ENCODE measurements at regions of chr9 and their contacts with region 1.

Region 1: DNA sequence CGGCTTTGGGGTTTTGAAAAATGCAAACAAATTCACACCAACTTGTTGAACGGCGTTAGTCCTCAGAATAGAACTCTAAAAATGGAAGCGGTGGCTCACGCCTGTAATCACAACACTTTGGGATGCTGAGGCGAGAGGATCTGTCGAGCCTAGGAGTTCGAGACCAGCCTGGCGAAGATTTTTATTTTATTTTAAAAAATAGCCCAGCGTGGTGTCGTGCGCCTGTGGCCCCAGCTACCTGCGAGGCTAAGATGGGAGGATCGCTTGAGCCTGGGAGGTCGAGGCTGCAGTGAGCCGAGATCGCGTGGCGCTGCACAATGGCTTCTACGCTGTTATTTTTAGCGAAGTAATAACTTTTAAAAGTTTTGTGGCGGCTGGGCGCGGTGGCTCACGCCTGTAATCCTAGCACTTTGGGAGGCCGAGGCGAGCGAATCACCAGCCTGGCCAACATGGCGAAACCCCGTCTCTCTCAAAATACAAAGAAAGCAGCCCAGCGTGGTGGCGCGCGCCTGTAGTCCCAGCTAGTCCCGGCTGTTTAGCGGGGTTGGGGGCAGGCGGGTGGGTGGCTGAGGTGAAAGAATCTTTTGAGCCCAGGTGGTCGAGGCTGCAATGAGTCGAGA is 699 bp upstream of the PLIN2 start:
- DNase-seq: no peak
- ATAC-seq: peak; percentile 35
- H3K4me3 ChIP-seq: peak overlapping the region; percentile 77
- H3K27ac ChIP-seq: peak overlapping the region; percentile 85
- H3K4me1 ChIP-seq: peaks cover 23% of the 10 kb centered on the region
- H3K27me3 ChIP-seq: no peaks in the 10 kb centered on the region
- CTCF ChIP-seq: no peak
- EP300 ChIP-seq: no peak
- POLR2A ChIP-seq: no peak; the same call in 1 of the 2 replicates
- RAD21 ChIP-seq: no peak

Region 2: GRCh38 chr9:19085295-19085694 is 42.7 kb before region 1 on chr9:
- CTCF ChIA-PET with region 1: interaction called, 11 read pairs
- POLR2A ChIA-PET with region 1: interaction called, 5 read pairs
- RAD21 ChIA-PET with region 1: interaction called, 4 read pairs
- SMC1A ChIA-PET with region 1: interaction called, 5 read pairs
- in situ Hi-C with region 1: no loop called
- intact Hi-C with region 1: no loop called
- DNase-seq: no peak
- ATAC-seq: peak; percentile 88
- H3K4me3 ChIP-seq: no peak overlapping the region
- H3K27ac ChIP-seq: no peak overlapping the region
- H3K4me1 ChIP-seq: no peaks in the 10 kb centered on the region
- H3K27me3 ChIP-seq: no peaks in the 10 kb centered on the region
- CTCF ChIP-seq: peak; percentile 33 to 47 (median 35); a peak in 3 of 6 replicates
- EP300 ChIP-seq: no peak
- POLR2A ChIP-seq: no peak
- RAD21 ChIP-seq: peak; percentile 47

Region 3: GRCh38 chr9:19102631-19103345 is 25.2 kb before region 1 on chr9 and contains the start of gene HAUS6:
- CTCF ChIA-PET with region 1: interaction called, 3 read pairs
- POLR2A ChIA-PET with region 1: interaction called, 9 read pairs
- RAD21 ChIA-PET with region 1: interaction called, 5 read pairs
- SMC1A ChIA-PET with region 1: interaction called, 3 read pairs
- in situ Hi-C with region 1: no loop called
- intact Hi-C with region 1: loop called (anchors 1 kb)
- DNase-seq: peak; percentile 89
- ATAC-seq: peak; percentile 98
- H3K4me3 ChIP-seq: peak within 1 kb of the TSS; percentile 80
- H3K27ac ChIP-seq: peak within 1 kb of the TSS; percentile 72
- H3K4me1 ChIP-seq: peaks cover 9% of the 10 kb centered on the region; the same call in 1 of the 2 replicates
- H3K27me3 ChIP-seq: no peaks in the 10 kb centered on the region
- CTCF ChIP-seq: peak in 2 of 3 experiments; percentile 10 to 44; a peak in 1 of 6 replicates
- EP300 ChIP-seq: no peak
- POLR2A ChIP-seq: peak; percentile 80
- RAD21 ChIP-seq: no peak
- polyA plus RNA-seq, gene HAUS6: 7.1 to 8.4 TPM

Region 4: DNA sequence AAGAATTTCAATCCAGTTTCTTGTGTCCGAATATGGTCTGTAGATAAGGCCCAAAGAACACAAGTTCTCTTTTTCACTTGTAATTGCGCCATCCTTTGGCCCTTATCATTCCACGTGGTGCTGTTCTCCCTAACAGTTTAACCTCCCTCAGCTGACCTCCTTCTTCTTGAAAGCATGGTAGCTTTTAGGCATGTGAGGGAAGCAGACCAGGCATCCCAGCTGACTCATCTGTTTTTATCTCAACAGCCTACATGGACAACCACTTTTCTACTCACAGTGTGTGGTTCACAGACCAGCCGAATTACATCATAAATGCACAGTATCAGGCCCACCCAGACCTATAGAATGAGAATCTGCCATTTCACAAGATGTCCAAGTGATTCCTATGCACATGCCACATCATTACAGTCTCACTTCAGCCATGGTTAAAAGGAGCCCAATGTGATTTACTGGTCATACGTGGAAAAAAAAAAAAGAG is 26.2 kb after region 1 on chr9:
- CTCF ChIA-PET with region 1: interaction called, 8 read pairs
- POLR2A ChIA-PET with region 1: interaction called, 9 read pairs
- RAD21 ChIA-PET with region 1: interaction called, 11 read pairs
- SMC1A ChIA-PET with region 1: interaction called, 15 read pairs
- in situ Hi-C with region 1: no loop called
- intact Hi-C with region 1: no loop called
- DNase-seq: no peak
- ATAC-seq: peak; percentile 21; the same call in 2 of the 3 replicates
- H3K4me3 ChIP-seq: no peak overlapping the region
- H3K27ac ChIP-seq: no peak overlapping the region
- H3K4me1 ChIP-seq: no peaks in the 10 kb centered on the region; the same call in 1 of the 2 replicates
- H3K27me3 ChIP-seq: no peaks in the 10 kb centered on the region
- CTCF ChIP-seq: no peak
- EP300 ChIP-seq: no peak
- POLR2A ChIP-seq: no peak
- RAD21 ChIP-seq: no peak

Region 5: DNA sequence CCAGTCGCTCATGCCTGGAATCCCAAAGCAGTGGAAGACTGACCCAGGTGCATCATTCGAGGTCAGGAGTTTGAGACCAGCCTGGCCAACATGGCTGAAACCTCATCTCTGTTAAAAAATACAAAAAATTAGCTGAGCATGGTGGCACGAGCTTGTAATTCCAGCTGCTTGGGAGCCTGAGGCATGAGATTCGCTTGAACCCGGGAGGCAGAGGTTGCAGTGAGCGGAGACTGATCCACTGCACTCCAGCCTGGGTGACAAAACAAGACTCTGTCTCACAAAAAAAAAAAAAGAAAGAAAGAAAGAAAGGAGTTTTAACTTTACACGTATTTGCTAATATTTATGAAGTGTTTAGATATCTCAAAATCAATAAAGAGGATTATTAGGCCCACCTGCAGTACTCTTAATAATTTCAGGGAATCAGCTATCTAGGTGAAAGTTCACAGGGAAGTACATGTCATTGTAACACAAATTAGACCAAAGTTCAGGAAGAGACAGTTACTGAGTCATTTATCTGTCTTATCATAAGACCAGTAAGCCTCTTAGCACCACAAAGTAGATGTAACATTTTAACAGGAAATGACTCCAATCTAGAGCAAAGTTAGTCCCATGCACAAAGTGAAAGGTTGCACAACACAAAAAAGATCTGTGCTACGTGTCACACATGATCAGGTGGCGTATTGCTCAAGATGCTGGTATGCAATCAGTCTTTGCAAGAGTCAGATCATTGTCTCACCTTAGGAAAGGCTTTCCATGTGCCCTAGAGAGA is 33.5 kb after region 1 on chr9:
- CTCF ChIA-PET with region 1: interaction called, 9 read pairs
- POLR2A ChIA-PET with region 1: interaction called, 23 read pairs
- RAD21 ChIA-PET with region 1: interaction called, 11 read pairs
- SMC1A ChIA-PET with region 1: interaction called, 15 read pairs
- in situ Hi-C with region 1: no loop called
- intact Hi-C with region 1: no loop called
- DNase-seq: peak; percentile 74
- ATAC-seq: peak; percentile 96
- H3K4me3 ChIP-seq: no peak overlapping the region
- H3K27ac ChIP-seq: peak overlapping the region; percentile 35
- H3K4me1 ChIP-seq: peaks cover 5% of the 10 kb centered on the region; the same call in 1 of the 2 replicates
- H3K27me3 ChIP-seq: no peaks in the 10 kb centered on the region
- CTCF ChIP-seq: no peak
- EP300 ChIP-seq: peak in 1 of 2 experiments; percentile 75; a peak in 2 of 4 replicates
- POLR2A ChIP-seq: 0 out of 2 replicates have a peak, but pooled peaks have one; percentile 30
- RAD21 ChIP-seq: no peak

Measured in GM12878 (cell line).